CD4-positive, alpha-beta memory T cell (primary cell): ENCODE measurements at regions of chr5 and their contacts with region 1.

Region 1: DNA sequence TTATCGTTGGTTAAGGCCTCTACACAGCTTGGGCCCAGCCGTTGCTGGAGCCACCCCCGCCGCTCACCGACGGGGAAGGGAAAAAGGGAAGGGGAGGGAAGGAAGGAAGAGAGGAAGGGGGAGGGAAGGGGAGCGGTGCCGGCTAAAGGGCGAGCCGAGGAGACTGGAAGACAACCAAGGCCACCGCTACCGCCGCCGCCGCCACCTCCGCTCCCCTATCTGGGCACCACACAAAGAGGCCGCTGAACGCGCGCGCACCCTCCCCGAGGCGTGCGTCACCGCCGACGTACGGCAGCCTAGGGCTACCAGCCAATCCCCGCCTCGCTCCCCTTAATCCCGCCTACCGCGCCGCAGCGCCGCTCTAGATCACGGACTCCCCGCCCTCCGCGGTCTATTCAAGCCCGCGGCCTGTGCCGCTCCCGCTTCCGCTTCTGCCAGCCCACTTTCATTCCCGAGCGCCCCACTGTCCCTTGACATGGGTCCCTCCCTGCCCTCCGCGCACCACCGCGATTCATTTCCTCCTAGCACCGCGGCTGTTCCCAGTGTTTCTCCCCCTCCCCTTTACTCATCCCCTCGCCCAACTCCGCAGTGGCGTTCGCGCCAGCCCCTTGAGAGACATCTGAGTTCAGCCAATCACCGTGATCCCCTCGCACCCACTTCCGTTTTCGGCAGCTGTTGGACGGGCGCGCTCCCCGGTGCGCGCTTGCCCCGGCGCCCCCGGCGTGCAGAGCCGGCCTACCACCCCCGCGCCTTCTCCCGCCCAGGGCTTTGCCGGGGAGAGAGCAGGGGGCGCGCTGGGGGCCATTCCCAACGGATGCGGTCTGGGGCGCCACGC is at the start of gene HNRNPA0:
- DNase-seq: peak; percentile 98 to 99 (median 99)
- H3K4me3 ChIP-seq: peak within 1 kb of the TSS; percentile 49 to 96
- H3K4me3 Mint-ChIP-seq: peak within 1 kb of the TSS; percentile 98 to 100 (median 99)
- H3K27ac ChIP-seq: peak within 1 kb of the TSS; percentile 100
- H3K27ac Mint-ChIP-seq: peak within 1 kb of the TSS; percentile 100
- H3K4me1 ChIP-seq: peaks cover 33% of the 10 kb centered on the region
- H3K4me1 Mint-ChIP-seq: peaks cover 26 to 54% (median 34%) of the 10 kb centered on the region in 4 donors
- H3K27me3 ChIP-seq: no peaks in the 10 kb centered on the region
- H3K27me3 Mint-ChIP-seq: peaks cover 0 to 9% of the 10 kb centered on the region in 2 donors
- total RNA-seq, gene HNRNPA0: 30.5 to 30.7 TPM

Region 2: GRCh38 chr5:137665678-137666460 is 88.5 kb before region 1 on chr5:
- CTCF ChIA-PET with region 1: interaction called, 653 read pairs
- POLR2A ChIA-PET with region 1: interaction called, 29 read pairs
- intact Hi-C with region 1: no loop called
- DNase-seq: peak; percentile 41 to 52 (median 49)
- H3K4me3 ChIP-seq: no peak overlapping the region
- H3K4me3 Mint-ChIP-seq: peak overlapping the region in 2 of 8 donors; percentile 12 to 59
- H3K27ac ChIP-seq: no peak overlapping the region
- H3K27ac Mint-ChIP-seq: peak overlapping the region; percentile 5 to 74 (median 37)
- H3K4me1 ChIP-seq: peaks cover 13% of the 10 kb centered on the region
- H3K4me1 Mint-ChIP-seq: peaks cover 11 to 20% (median 14%) of the 10 kb centered on the region in 4 donors
- H3K27me3 ChIP-seq: no peaks in the 10 kb centered on the region
- H3K27me3 Mint-ChIP-seq: no peaks in the 10 kb centered on the region

Region 3: GRCh38 chr5:137735555-137736284 is 18.6 kb before region 1 on chr5 and contains the start of gene KLHL3:
- CTCF ChIA-PET with region 1: interaction called, 37 read pairs
- POLR2A ChIA-PET with region 1: interaction called, 85 read pairs
- intact Hi-C with region 1: loop called (anchors 1 kb)
- DNase-seq: peak in 4 of 5 donors; percentile 26 to 39 (median 28)
- H3K4me3 ChIP-seq: peak within 1 kb of the TSS; percentile 61 to 73
- H3K4me3 Mint-ChIP-seq: no peak within 1 kb of the TSS
- H3K27ac ChIP-seq: peak within 1 kb of the TSS; percentile 36
- H3K27ac Mint-ChIP-seq: no peak within 1 kb of the TSS
- H3K4me1 ChIP-seq: peaks cover 68% of the 10 kb centered on the region
- H3K4me1 Mint-ChIP-seq: peaks cover 13 to 20% (median 14%) of the 10 kb centered on the region in 4 donors
- H3K27me3 ChIP-seq: no peaks in the 10 kb centered on the region
- H3K27me3 Mint-ChIP-seq: no peaks in the 10 kb centered on the region
- total RNA-seq, gene KLHL3: 22.0 to 25.9 TPM

Region 4: GRCh38 chr5:138035605-138036537 is 281.5 kb after region 1 on chr5:
- CTCF ChIA-PET with region 1: no interaction called
- POLR2A ChIA-PET with region 1: interaction called, 13 read pairs
- intact Hi-C with region 1: loop called (anchors 1 kb)
- DNase-seq: peak; percentile 75 to 81 (median 76)
- H3K4me3 ChIP-seq: no peak overlapping the region
- H3K4me3 Mint-ChIP-seq: peak overlapping the region in 7 of 8 donors; percentile 1 to 90 (median 56)
- H3K27ac ChIP-seq: no peak overlapping the region
- H3K27ac Mint-ChIP-seq: peak overlapping the region; percentile 14 to 77 (median 72)
- H3K4me1 ChIP-seq: peaks cover 20% of the 10 kb centered on the region
- H3K4me1 Mint-ChIP-seq: peaks cover 18 to 38% (median 25%) of the 10 kb centered on the region in 4 donors
- H3K27me3 ChIP-seq: no peaks in the 10 kb centered on the region
- H3K27me3 Mint-ChIP-seq: no peaks in the 10 kb centered on the region

Region 5: GRCh38 chr5:138331449-138332368 is 577.4 kb after region 1 on chr5 and contains the start of gene CDC25C:
- CTCF ChIA-PET with region 1: no interaction called
- POLR2A ChIA-PET with region 1: interaction called, 3 read pairs
- intact Hi-C with region 1: loop called (anchors 2 kb)
- DNase-seq: peak; percentile 94 to 99 (median 97)
- H3K4me3 ChIP-seq: peak within 1 kb of the TSS; percentile 43 to 71
- H3K4me3 Mint-ChIP-seq: peak within 1 kb of the TSS; percentile 77 to 90 (median 88)
- H3K27ac ChIP-seq: peak within 1 kb of the TSS; percentile 20
- H3K27ac Mint-ChIP-seq: peak within 1 kb of the TSS; percentile 36 to 92 (median 77)
- H3K4me1 ChIP-seq: peaks cover 13% of the 10 kb centered on the region
- H3K4me1 Mint-ChIP-seq: peaks cover 5 to 16% (median 11%) of the 10 kb centered on the region in 4 donors
- H3K27me3 ChIP-seq: no peaks in the 10 kb centered on the region
- H3K27me3 Mint-ChIP-seq: no peaks in the 10 kb centered on the region
- total RNA-seq, gene CDC25C: not detected